MCF 10A (cell line): ENCODE measurements at regions of chr16 and their contacts with region 1.

Region 1: GRCh38 chr16:62342216-62342615 is 306.0 kb upstream of the CDH8 start:
- DNase-seq: no peak
- H3K4me3 Mint-ChIP-seq: no peak overlapping the region
- H3K27ac Mint-ChIP-seq: no peak overlapping the region
- H3K4me1 Mint-ChIP-seq: no peaks in the 10 kb centered on the region
- H3K27me3 Mint-ChIP-seq: no peaks in the 10 kb centered on the region
- CTCF ChIP-seq: no peak

Region 2: DNA sequence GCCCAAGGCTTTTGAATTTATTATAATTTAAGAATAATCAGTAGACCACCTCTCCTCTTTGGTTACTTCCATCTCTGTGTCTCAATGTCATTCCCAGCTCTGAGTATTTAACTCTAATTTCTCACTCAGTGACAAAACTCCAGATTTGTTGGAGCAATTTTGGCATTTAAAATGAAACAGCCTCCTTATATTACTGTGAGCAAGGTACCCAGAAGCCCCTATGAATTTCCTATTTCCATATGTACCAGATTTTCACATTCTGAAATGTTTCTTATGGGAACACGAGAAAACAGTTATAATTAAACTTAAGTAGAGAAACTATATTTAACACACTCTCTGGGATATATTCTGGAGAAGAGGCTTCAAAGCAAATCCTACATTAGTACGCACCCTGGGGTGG is 20.6 kb before region 1 on chr16:
- CTCF ChIA-PET with region 1: no interaction called
- POLR2A ChIA-PET with region 1: no interaction called
- intact Hi-C with region 1: loop called (anchors 1 kb)
- DNase-seq: no peak
- H3K4me3 Mint-ChIP-seq: no peak overlapping the region
- H3K27ac Mint-ChIP-seq: no peak overlapping the region
- H3K4me1 Mint-ChIP-seq: no peaks in the 10 kb centered on the region
- H3K27me3 Mint-ChIP-seq: no peaks in the 10 kb centered on the region
- CTCF ChIP-seq: no peak